Kidney (tissue), 22 donors: ENCODE measurements at regions of chr16 and their contacts with region 1.

Region 1: GRCh38 chr16:48623304-48624016 is 13.5 kb upstream of the N4BP1 start:
- DNase-seq: peak; percentile 87 to 94 (median 89)
- H3K4me3 ChIP-seq: peak overlapping the region; percentile 40 to 78 (median 74)
- H3K27ac ChIP-seq: peak overlapping the region; percentile 51 to 71
- H3K4me1 ChIP-seq: peaks cover 0 to 6% (median 0%) of the 10 kb centered on the region in 3 donors
- H3K27me3 ChIP-seq: no peaks in the 10 kb centered on the region
- CTCF ChIP-seq: peak; percentile 97

Region 2: GRCh38 chr16:48353565-48354163 is 269.8 kb before region 1 on chr16:
- intact Hi-C with region 1: loop called (anchors 10 kb)
- DNase-seq: peak in 4 of 5 donors; percentile 57 to 75 (median 66)
- H3K4me3 ChIP-seq: no peak overlapping the region
- H3K27ac ChIP-seq: no peak overlapping the region
- H3K4me1 ChIP-seq: peaks cover 0 to 6% (median 2%) of the 10 kb centered on the region in 3 donors
- H3K27me3 ChIP-seq: no peaks in the 10 kb centered on the region
- CTCF ChIP-seq: peak; percentile 78